ENCODE measurements at regions of chr18 and their contacts with region 1.

Region 1: GRCh38 chr18:49813319-49814146 is at the start of gene ACAA2:
- DNase-seq: peak; percentile 83
- ATAC-seq: peak; percentile 94
- H3K4me3 ChIP-seq: peak within 1 kb of the TSS; percentile 69
- H3K27ac ChIP-seq: peak within 1 kb of the TSS; percentile 94
- H3K4me1 ChIP-seq: peaks cover 10% of the 10 kb centered on the region
- H3K27me3 ChIP-seq: no peaks in the 10 kb centered on the region
- CTCF ChIP-seq: no peak
- POLR2A ChIP-seq: peak; percentile 62
- RAD21 ChIP-seq: no peak
- total RNA-seq, gene ACAA2: 61.5 and 71.7 TPM in 2 replicates

Region 2: DNA sequence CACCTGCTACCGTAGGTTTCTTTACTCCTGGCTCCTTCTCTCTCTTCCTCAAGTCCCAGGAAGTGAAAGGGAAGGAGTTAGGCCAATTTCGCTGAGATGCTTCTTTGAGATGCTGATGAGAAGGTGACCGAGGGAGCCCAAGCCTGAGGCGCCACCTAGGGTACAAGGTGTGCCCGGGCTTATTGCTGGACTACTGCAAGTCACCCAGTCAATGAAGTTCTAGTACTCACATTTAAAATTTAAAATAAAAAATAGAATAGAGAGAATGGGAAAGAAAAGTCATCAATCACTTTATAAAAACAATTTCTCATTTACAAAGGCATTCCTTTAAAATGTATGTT is 45.5 kb before region 1 on chr18:
- CTCF ChIA-PET with region 1: no interaction called
- POLR2A ChIA-PET with region 1: no interaction called
- dilution Hi-C with region 1: no loop called
- in situ Hi-C with region 1: no loop called
- intact Hi-C with region 1: no loop called
- DNase-seq: peak; percentile 65
- ATAC-seq: 0 out of 2 replicates have a peak, but pooled peaks have one; percentile 52
- H3K4me3 ChIP-seq: no peak overlapping the region
- H3K27ac ChIP-seq: no peak overlapping the region
- H3K4me1 ChIP-seq: peaks cover 5% of the 10 kb centered on the region
- H3K27me3 ChIP-seq: peaks cover 4% of the 10 kb centered on the region
- CTCF ChIP-seq: peak; percentile 71
- POLR2A ChIP-seq: no peak
- RAD21 ChIP-seq: peak; percentile 84

Region 3: DNA sequence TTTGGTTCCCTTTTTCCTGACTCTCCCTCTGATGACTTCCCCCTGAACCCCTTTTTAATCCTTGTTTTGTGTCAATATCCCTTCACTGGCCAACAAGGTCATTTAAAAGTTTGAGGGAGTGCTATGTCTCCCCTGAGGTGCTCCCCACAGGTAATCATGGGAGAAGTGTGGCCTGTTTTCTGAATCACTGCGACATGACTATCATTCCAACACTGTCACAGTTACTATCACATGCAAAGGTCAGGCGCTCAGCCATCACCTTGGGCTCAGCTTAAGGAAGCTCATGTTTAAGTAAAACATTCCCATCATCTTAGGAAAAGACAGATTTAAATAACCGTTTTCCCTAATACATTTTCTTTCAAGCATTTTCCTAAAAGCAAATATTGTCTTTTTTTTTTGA is 20.7 kb after region 1 on chr18:
- CTCF ChIA-PET with region 1: no interaction called
- POLR2A ChIA-PET with region 1: interaction called, 4 read pairs
- dilution Hi-C with region 1: no loop called
- in situ Hi-C with region 1: no loop called
- intact Hi-C with region 1: loop called (anchors 2 kb)
- DNase-seq: no peak
- ATAC-seq: no peak
- H3K4me3 ChIP-seq: no peak overlapping the region
- H3K27ac ChIP-seq: peak overlapping the region; percentile 76; the same call in 1 of the 2 replicates
- H3K4me1 ChIP-seq: peaks cover 8% of the 10 kb centered on the region; the same call in 1 of the 2 replicates
- H3K27me3 ChIP-seq: no peaks in the 10 kb centered on the region
- CTCF ChIP-seq: no peak
- POLR2A ChIP-seq: no peak
- RAD21 ChIP-seq: no peak

Measured in IMR-90 (cell line).